AG04449 (cell line): ENCODE measurements at regions of chr9 and their contacts with region 1.

Region 1: DNA sequence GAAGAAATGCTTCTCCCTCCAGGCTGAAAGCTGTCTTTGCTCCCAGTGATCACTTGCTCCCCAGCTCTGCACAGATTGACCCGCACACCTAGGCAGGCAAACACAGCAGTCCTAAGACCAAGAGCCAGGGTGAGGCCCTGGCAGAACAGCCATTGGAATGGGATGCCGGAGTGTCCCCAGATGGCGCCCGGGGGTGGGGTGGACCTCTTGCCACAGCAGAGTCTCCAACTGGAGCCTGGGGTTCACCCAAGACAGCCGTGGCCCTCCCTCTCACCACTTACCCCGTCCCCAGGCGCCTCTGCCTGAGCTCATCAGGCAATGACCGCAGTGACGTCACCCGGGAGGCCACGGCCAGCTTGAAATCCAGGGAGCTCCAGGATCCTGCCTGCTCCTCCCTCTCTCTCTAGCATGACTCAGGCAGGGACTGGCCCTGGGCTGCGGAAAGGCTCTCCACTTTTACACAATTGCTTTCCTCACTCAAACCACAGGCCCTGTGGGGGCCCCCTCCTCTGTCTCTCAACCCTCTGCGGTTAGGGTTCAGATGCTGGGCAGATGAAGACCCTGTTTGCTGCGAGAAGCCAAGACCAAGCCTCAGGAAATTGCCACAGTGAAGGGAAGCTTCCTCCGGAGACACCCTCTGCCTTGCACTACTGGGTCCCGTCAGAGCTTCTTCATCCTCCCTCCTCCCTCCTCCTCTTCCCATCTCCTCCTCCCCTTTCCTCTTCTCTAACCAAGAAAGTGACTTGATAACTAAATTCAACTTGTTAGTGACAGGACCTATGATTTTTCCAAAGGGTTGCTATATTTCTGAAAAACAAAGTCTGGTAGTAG is 24.3 kb upstream of the PTGES start:
- DNase-seq: peak; percentile 98
- H3K4me3 ChIP-seq: peak overlapping the region; percentile 36
- CTCF ChIP-seq: no peak

Region 2: DNA sequence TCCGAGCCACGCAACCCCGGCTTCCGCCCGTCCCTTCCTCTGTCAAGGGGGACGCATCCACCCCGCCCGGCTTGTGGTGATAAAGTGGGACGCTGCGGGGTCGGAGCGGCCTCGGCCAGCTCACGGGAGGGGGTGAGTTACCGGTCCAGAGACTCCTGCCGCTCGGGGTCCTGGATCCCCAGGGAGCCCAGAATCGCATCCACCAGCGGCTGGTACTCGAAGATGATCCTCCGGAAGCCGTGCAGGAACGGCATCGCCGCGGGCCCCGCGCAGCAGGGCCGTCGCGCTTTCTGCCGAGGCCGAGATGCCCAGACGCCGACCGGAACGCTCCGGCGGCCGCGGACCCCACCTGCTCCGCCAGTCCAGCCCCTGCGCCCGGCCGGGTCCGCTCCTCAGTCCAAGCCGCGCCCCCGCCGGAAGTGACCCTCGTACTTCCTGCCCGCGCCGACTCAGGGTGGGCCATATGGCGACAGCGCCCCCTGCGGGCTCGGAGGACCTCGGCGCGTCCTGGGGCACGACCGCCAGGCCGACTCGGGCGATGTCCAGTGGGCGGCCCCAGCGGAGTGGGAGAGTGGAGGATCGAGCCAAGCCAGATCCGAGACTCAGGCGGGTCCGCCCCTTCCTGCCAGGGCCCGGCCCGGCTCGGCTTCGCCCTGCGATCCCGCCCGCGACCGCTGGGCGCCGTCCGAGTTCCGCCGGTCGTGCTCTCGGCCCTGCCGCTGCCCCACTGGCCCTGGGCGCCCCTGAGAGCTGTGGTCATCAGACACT is 135.2 kb before region 1 on chr9 and contains the start of gene ASB6:
- CTCF ChIA-PET with region 1: interaction called, 267 read pairs
- POLR2A ChIA-PET with region 1: no interaction called
- DNase-seq: peak; percentile 69
- H3K4me3 ChIP-seq: peak within 1 kb of the TSS; percentile 87
- CTCF ChIP-seq: peak; percentile 89

Region 3: GRCh38 chr9:129688285-129689043 is 88.7 kb before region 1 on chr9:
- CTCF ChIA-PET with region 1: no interaction called
- POLR2A ChIA-PET with region 1: no interaction called
- DNase-seq: no peak
- H3K4me3 ChIP-seq: no peak overlapping the region
- CTCF ChIP-seq: no peak

Region 4: GRCh38 chr9:129752915-129753729 is 24.0 kb before region 1 on chr9 and contains the start of gene PTGES:
- CTCF ChIA-PET with region 1: interaction called, 54 read pairs
- POLR2A ChIA-PET with region 1: interaction called, 12 read pairs
- DNase-seq: no peak
- H3K4me3 ChIP-seq: peak within 1 kb of the TSS; percentile 63
- CTCF ChIP-seq: no peak

Region 5: DNA sequence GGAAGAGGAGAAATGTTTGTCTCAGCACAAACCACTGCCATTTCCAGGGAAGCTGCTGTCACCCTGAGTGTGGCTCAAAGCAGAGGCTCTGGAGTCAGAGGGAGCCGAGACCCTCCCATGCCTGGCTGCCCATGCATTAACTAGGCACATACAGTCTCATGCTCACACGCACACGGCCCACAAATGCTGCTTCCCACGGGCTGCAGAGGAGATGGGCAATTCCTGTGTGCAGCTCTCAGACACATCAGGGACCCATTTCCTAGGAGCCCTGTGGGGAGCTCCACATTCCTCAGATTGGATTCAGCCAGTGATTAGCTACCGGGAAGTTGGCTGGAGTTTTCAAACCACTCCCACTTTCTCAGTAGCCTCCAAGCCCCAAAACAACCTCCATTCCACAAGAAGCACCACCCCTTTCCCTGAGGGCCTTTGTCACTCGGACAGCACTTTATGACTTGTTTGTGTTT is 15.2 kb before region 1 on chr9:
- CTCF ChIA-PET with region 1: interaction called, 9 read pairs
- POLR2A ChIA-PET with region 1: interaction called, 12 read pairs
- DNase-seq: no peak
- H3K4me3 ChIP-seq: no peak overlapping the region
- CTCF ChIP-seq: no peak